K562 (cell line): ENCODE measurements at regions of chr18 and their contacts with region 1.

Region 1: GRCh38 chr18:57859314-57859713 is 56.2 kb upstream of the ATP8B1 start:
- DNase-seq: peak; percentile 22 to 35 (median 24)
- ATAC-seq: peak; percentile 90
- H3K4me3 ChIP-seq: no peak overlapping the region
- H3K27ac ChIP-seq: no peak overlapping the region
- H3K4me1 ChIP-seq: peaks cover 0 to 6% of the 10 kb centered on the region in 2 experiments; a peak in 1 of 5 replicates
- H3K27me3 ChIP-seq: no peaks in the 10 kb centered on the region
- CTCF ChIP-seq: peak; percentile 48 to 64 (median 50)
- EP300 ChIP-seq: no peak
- POLR2A ChIP-seq: no peak
- RAD21 ChIP-seq: peak in 1 of 2 experiments; percentile 64; a peak in 2 of 4 replicates

Region 2: DNA sequence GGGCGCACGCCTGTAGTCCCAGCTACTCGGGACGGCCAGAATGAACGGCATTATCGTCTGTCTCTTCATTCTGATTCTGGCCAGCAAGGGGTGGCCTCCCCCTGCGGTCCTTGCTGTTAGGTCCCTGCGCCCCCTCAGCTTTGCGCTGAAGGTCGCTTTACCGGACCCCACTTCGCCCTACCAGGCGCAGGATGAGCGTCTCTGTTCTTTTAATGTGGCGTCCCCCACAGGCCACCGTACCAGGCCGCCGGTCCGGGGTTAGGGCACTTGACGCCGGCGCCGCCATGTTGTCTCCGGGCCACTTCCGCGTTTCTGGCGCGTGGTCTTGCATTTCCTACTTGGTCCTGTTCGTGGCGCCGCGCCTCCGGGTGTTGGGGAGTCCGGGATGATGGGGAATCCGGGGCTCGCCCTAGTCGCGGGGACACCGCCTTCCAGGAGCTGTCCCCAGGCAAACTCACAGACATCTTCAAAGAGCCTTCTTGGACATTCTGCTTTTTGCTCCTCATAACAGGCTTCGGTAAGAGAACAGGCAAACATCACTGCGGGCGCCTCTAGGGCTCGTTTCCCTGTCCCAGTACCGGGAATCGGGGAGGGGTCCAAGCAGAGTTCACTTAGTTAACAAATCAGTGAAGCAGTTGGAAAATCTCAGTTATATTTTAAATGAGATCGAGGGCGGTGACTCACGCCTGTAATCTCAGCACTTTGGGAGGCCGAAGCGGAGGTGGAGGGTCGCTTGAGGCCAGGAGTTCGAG is 229.1 kb before region 1 on chr18:
- CTCF ChIA-PET with region 1: no interaction called
- POLR2A ChIA-PET with region 1: no interaction called
- in situ Hi-C with region 1: loop called (anchors 25 kb)
- intact Hi-C with region 1: loop called (anchors 5 kb)
- DNase-seq: peak; percentile 80 to 94 (median 84)
- ATAC-seq: peak; percentile 99
- H3K4me3 ChIP-seq: peak overlapping the region; percentile 48
- H3K27ac ChIP-seq: peak overlapping the region; percentile 69
- H3K4me1 ChIP-seq: peaks cover 6 to 13% of the 10 kb centered on the region in 2 experiments; a peak in 4 of 5 replicates
- H3K27me3 ChIP-seq: no peaks in the 10 kb centered on the region
- CTCF ChIP-seq: peak; percentile 78 to 83 (median 78)
- EP300 ChIP-seq: peak; percentile 20; the same call in 1 of the 2 replicates
- POLR2A ChIP-seq: no peak
- RAD21 ChIP-seq: peak; percentile 82

Region 3: DNA sequence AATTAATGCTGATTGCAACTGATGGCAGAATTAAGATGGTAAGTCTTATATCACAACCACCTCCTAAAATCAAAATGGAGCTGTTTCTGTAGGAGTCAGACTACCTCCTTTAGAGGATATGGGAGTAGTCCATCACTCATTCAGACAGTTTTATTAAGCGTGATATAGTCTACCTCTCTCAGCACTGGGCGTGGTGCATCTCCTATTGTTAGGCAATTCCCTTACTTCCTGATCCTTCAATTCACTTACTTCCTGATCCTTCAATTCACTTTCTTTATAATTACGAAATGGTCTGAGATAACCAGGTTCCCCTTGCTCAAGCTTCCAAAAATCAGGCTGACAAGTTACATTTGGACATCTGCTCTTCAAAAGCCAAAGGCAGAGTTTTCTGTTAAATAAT is 88.1 kb before region 1 on chr18:
- CTCF ChIA-PET with region 1: no interaction called
- POLR2A ChIA-PET with region 1: no interaction called
- in situ Hi-C with region 1: no loop called
- intact Hi-C with region 1: loop called (anchors 10 kb)
- DNase-seq: no peak
- ATAC-seq: no peak
- H3K4me3 ChIP-seq: no peak overlapping the region
- H3K27ac ChIP-seq: no peak overlapping the region
- H3K4me1 ChIP-seq: peaks cover 0 to 4% of the 10 kb centered on the region in 2 experiments; a peak in 2 of 5 replicates
- H3K27me3 ChIP-seq: no peaks in the 10 kb centered on the region; a peak in 1 of 5 replicates
- CTCF ChIP-seq: no peak
- EP300 ChIP-seq: no peak
- POLR2A ChIP-seq: no peak
- RAD21 ChIP-seq: no peak

Region 4: DNA sequence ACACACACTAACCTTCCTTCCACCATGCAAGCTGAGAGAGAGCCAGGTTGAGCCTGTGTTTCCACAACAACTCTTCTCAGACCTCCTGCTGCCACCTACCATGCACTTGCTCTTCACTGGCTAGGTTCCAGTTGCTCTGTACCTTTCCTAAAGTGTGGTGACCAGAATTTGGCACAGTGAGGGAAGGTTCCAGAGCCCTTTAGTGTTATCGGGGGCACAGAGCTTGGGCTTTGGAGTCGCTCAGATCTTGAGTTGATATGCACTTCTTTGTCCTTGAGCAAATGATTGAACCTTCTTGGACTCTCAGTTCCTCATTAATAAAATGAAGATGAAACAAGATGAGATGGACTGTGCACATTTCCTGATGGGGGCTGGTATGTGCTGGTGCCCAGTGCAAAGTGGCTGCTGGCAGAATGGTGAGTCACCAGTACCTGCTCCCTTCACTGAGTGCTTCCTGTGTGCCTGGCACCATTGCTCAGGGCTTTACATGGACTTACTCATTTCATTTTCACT is 231.8 kb after region 1 on chr18:
- CTCF ChIA-PET with region 1: no interaction called
- POLR2A ChIA-PET with region 1: no interaction called
- in situ Hi-C with region 1: no loop called
- intact Hi-C with region 1: no loop called
- DNase-seq: no peak
- ATAC-seq: no peak
- H3K4me3 ChIP-seq: no peak overlapping the region
- H3K27ac ChIP-seq: no peak overlapping the region
- H3K4me1 ChIP-seq: peaks cover 5 to 10% of the 10 kb centered on the region in 2 experiments; a peak in 3 of 5 replicates
- H3K27me3 ChIP-seq: no peaks in the 10 kb centered on the region
- CTCF ChIP-seq: no peak
- EP300 ChIP-seq: no peak
- POLR2A ChIP-seq: no peak
- RAD21 ChIP-seq: no peak